IMR-90 (cell line): ENCODE measurements at regions of chr4 and their contacts with region 1.

Region 1: GRCh38 chr4:11710453-11711093 is 281.9 kb upstream of the HS3ST1 start:
- DNase-seq: peak; percentile 80
- ATAC-seq: peak; percentile 89
- H3K4me3 ChIP-seq: no peak overlapping the region
- H3K27ac ChIP-seq: peak overlapping the region; percentile 4; the same call in 1 of the 2 replicates
- H3K4me1 ChIP-seq: no peaks in the 10 kb centered on the region
- H3K27me3 ChIP-seq: no peaks in the 10 kb centered on the region
- CTCF ChIP-seq: no peak
- POLR2A ChIP-seq: no peak
- RAD21 ChIP-seq: no peak

Region 2: DNA sequence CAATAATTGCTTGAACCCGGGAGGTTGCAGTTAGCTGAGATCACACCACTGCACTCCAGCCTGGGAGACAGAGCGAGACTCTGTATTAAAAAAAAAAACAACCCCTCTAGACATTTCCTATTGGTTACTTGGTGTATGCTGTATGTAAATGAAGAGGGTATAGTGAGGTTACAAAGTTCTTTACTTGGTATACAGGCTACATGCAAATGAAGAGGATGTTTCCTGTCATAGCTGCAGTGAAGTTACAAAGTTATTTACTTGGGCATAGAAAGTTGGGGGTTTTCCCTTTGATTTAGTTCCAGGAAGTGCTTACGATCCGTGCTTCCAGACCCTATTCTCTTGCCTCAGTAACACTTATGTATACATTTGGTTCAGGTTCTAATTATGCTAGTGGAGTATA is 987.6 kb before region 1 on chr4:
- CTCF ChIA-PET with region 1: no interaction called
- POLR2A ChIA-PET with region 1: no interaction called
- dilution Hi-C with region 1: no loop called
- in situ Hi-C with region 1: no loop called
- intact Hi-C with region 1: no loop called
- DNase-seq: no peak
- ATAC-seq: no peak
- H3K4me3 ChIP-seq: no peak overlapping the region
- H3K27ac ChIP-seq: no peak overlapping the region
- H3K4me1 ChIP-seq: no peaks in the 10 kb centered on the region
- H3K27me3 ChIP-seq: no peaks in the 10 kb centered on the region; the same call in 1 of the 2 replicates
- CTCF ChIP-seq: no peak
- POLR2A ChIP-seq: no peak
- RAD21 ChIP-seq: no peak

Region 3: GRCh38 chr4:11489454-11490083 is 221.0 kb before region 1 on chr4:
- CTCF ChIA-PET with region 1: no interaction called
- POLR2A ChIA-PET with region 1: no interaction called
- dilution Hi-C with region 1: no loop called
- in situ Hi-C with region 1: no loop called
- intact Hi-C with region 1: loop called (anchors 5 kb)
- DNase-seq: no peak
- ATAC-seq: no peak
- H3K4me3 ChIP-seq: no peak overlapping the region
- H3K27ac ChIP-seq: no peak overlapping the region
- H3K4me1 ChIP-seq: no peaks in the 10 kb centered on the region
- H3K27me3 ChIP-seq: no peaks in the 10 kb centered on the region
- CTCF ChIP-seq: no peak
- POLR2A ChIP-seq: no peak
- RAD21 ChIP-seq: no peak

Region 4: GRCh38 chr4:11623726-11624037 is 86.9 kb before region 1 on chr4:
- CTCF ChIA-PET with region 1: no interaction called
- POLR2A ChIA-PET with region 1: no interaction called
- dilution Hi-C with region 1: no loop called
- in situ Hi-C with region 1: no loop called
- intact Hi-C with region 1: loop called (anchors 5 kb)
- DNase-seq: peak; percentile 27
- ATAC-seq: no peak
- H3K4me3 ChIP-seq: no peak overlapping the region
- H3K27ac ChIP-seq: no peak overlapping the region
- H3K4me1 ChIP-seq: peaks cover 6% of the 10 kb centered on the region
- H3K27me3 ChIP-seq: no peaks in the 10 kb centered on the region
- CTCF ChIP-seq: peak; percentile 28
- POLR2A ChIP-seq: no peak
- RAD21 ChIP-seq: no peak